Dorsolateral prefrontal cortex (tissue), 120 donors: ENCODE measurements at regions of chrX and their contacts with region 1.

Region 1: GRCh38 chrX:51802917-51803688 is 59.9 kb downstream of the GSPT2 start:
- DNase-seq: peak in 9 of 10 donors; percentile 45 to 76 (median 68)
- H3K4me3 ChIP-seq: peak overlapping the region; percentile 29 to 81 (median 64)
- H3K27ac ChIP-seq: peak overlapping the region in 28 of 59 donors; percentile 2 to 78 (median 48)
- H3K27me3 ChIP-seq: peaks cover 0 to 61% (median 13%) of the 10 kb centered on the region in 45 donors
- CTCF ChIP-seq: no peak

Region 2: DNA sequence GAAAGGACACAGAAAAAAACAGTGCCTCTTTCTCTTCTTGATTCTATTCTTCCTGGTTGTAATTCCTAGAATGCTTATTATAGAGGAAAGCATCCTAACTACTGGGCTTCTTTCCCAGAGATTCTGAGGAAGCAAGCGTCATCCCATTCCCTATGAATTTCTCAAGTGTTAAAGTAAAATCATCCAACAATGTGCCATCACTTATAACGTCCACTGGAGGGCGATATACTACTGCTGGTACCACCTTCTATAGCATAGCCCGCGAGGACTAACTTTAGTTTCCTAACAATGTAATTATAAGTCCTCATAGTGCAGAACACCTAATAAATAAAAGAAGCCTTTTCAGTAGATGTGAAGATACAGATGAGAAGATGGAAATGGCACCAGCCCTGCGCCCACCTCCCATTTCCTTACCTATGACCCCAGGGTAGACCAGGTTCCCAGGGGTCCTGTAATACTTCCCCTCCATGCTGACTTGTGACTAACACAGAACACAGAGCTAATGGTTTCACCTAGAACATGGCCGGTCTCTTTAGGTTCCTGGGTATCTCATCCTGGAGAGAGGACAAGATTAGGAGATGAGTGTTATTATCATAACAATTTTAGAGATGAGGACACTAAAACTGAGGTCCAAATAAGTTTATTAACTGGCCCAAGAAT is 188.6 kb before region 1 on chrX:
- intact Hi-C with region 1: loop called in 1 of 2 experiments (anchors 10 kb)
- DNase-seq: no peak
- H3K4me3 ChIP-seq: no peak overlapping the region
- H3K27ac ChIP-seq: no peak overlapping the region
- H3K27me3 ChIP-seq: peaks cover 0 to 91% (median 31%) of the 10 kb centered on the region in 45 donors
- CTCF ChIP-seq: peak in 53 of 56 donors; percentile 25 to 68 (median 53)